Head of caudate nucleus (tissue), 42 donors: ENCODE measurements at regions of chr3 and their contacts with region 1.

Region 1: DNA sequence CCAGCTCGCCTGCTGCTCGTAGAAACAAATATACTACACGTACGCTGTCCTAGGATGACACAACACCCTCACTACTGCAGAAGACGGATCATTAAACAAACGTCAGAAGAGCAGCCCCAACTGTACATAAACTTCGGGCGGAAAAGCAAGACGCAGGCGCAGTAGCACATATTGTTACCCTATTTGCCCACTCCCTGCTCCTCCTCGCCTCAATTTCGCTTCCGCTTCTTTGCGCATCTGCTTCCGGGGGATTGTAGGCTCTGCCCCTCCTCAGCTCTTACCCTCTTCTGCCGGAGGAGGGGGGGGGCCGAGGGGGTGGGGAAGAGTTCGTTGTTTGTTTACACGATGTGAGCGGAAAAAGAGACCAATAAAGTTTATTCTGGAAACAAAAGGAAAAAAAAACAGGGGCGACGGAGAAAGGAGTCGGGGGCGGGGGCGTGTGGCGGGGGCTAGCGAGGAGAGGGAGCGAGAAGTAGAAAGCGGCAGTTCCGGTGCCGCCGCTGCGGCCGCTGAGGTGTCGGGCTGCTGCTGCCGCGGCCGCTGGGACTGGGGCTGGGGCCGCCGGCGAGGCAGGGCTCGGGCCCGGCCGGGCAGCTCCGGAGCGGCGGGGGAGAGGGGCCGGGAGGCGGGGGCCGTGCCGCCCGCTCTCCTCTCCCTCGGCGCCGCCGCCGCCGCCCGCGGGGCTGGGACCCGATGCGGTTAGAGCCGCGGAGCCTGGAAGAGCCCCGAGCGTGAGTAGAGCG is at the start of gene PIK3CA:
- DNase-seq: peak; percentile 90 to 99 (median 97)

Region 2: DNA sequence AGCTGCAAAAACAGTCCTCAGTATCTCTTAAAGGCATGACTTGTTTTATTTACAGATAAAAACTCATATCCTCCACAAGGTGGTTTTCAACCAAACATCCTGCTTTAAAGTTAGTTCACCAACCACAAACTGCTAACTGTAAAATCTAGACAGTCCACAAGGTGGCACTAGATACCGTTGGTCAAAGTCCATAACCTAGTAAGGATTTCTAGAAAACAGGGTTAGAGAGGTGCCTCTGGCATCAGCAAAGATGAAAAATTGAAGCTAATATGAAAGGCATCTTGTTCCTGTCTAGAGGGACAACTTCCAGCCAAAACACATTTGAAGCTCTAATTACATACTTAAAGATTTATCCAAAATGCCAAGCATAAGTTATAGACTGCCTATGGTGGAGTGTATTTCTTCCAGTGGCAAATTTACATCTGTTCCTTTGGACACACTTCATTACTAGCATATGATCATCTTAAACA is 132.5 kb before region 1 on chr3:
- intact Hi-C with region 1: loop called (anchors 10 kb)
- DNase-seq: peak in 25 of 42 donors; percentile 11 to 87 (median 65)

Region 3: DNA sequence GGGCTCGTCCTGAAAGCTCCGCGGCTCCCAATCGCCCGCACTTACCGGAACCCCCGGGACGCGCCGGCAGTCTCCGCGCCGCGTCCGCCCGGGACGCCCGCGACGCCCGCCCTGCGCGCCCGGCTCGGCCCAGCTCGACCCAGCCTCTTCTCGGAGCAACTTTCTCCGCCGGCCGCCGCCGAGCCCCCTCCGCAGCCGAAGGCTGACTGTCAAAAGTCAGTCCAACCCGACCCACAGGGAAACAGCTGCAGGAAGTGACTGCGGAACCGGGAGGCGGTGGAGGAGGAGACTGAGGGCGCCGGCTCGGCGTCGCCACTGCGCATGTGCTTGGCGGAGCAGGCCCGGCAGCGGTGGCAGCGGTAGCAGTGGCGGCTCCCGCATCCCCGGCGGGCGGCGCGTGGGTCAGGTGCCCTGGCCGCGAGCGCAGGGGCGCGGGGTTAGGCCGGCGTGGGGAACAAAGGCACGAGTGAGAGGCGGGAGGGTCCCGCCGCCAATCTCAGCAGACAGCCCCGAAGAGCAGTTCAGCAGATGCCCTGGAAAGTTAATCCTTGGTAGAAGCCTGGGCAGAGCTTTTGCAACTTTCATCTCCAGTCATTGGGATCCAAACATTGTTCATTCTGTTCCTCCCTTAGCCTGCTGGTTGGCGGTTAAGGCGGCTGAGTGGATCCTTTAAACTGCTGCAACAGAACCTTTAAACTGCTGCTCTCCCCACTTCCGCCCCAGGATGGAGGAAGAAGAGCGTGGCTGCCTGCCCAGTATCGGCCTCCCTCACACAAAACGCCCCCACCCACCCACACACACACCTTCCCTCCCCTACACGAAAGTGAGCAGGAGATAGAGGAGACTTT is 76.3 kb before region 1 on chr3 and contains the start of gene ZMAT3:
- intact Hi-C with region 1: loop called (anchors 5 kb)
- DNase-seq: peak; percentile 79 to 96 (median 92)

Region 4: GRCh38 chr3:179196098-179196497 is 48.1 kb after region 1 on chr3:
- intact Hi-C with region 1: no loop called
- DNase-seq: no peak

Region 5: GRCh38 chr3:179260949-179261765 is 113.1 kb after region 1 on chr3:
- intact Hi-C with region 1: loop called (anchors 5 kb)
- DNase-seq: peak; percentile 12 to 85 (median 71)

Region 6: GRCh38 chr3:179322286-179323196 is 174.5 kb after region 1 on chr3 and contains the start of gene ZNF639:
- intact Hi-C with region 1: loop called (anchors 2 kb)
- DNase-seq: peak in 41 of 42 donors; percentile 39 to 89 (median 79)